Activated CD4-positive, alpha-beta memory T cell treated with anti-CD3 and anti-CD28 coated beads for 36 hours (primary cell): ENCODE measurements at regions of chr3 and their contacts with region 1.

Region 1: DNA sequence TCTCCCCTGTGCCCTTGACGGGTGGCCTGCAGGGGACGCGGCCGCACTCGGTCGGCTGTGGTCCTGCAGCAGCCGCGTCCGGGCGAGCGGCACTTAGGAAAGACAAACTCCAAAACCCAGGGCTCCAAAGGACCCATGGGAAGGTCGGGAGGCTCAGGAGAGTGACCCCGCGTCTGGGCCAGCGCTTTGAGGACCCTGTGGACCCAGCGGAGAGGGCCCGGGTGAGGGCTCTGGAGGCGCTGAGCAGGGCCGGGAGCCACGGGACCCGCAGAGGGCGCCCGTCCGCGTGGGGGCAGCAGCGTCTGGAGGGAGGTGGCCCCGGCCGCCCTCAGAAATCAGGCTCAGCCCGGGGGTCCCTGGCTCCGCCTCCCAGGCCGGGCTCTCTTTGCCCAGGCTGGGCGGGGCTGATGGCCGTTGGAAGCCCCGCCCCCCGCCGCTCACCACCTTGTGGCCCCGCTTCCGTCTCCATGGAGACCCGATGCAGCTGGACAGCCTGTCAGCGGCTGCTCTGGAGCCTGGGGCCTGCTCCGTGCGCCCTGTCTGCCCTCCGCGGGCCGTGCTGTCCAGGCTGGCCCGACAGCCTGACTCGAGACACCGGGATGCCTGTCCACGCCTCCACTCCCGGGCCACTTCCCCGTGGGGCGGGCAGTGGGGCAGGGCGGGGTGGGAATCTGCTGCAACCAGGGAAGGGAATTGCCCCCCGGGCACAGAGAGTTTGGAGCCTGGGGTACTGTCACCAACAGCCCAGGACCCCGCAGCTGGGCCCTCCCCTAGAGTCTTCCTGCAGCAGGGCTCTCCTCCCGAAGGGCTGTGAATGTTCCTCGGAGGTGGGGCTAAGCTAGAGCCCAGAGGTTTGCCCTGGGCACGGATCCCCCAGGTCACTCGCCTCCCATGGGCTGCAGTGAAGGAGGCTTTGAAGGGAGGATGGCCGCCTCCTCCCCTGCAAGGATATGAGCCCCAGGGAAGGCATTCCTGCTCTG is 34.8 kb upstream of the RPL32 start:
- DNase-seq: peak; percentile 30
- H3K4me3 Mint-ChIP-seq: no peak overlapping the region
- H3K27ac Mint-ChIP-seq: no peak overlapping the region
- H3K4me1 Mint-ChIP-seq: no peaks in the 10 kb centered on the region
- H3K27me3 Mint-ChIP-seq: peaks cover 8% of the 10 kb centered on the region

Region 2: DNA sequence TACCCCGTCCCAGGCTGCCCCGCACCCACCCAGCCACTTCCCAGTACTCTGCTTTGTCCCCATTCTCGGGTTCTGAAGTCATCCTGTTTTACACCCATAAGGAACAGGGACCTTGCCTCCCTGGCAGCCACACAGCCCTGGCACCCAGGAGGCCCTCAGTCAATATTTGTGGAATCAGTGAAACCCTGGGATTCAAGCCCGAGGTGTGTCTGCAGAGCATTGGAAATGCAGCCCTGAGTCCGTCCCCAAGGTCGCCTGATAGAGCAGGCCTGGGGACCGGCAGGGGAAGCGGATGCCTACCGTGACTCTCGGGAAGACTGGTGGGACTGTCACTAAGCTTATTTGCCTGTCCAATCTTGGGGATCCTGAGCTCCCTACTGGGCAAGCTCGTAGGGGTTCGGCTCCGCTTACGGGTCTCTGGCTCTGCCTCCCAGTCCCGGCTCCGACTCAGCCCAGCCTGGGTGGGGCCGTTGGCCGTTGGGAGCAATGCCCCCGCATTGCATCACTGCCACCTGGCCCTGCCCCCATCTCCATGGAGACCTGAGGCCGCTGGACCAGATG is 965.1 kb before region 1 on chr3:
- CTCF ChIA-PET with region 1: no interaction called
- POLR2A ChIA-PET with region 1: no interaction called
- intact Hi-C with region 1: loop called (anchors 10 kb)
- DNase-seq: no peak
- H3K4me3 Mint-ChIP-seq: no peak overlapping the region
- H3K27ac Mint-ChIP-seq: no peak overlapping the region
- H3K4me1 Mint-ChIP-seq: peaks cover 8% of the 10 kb centered on the region
- H3K27me3 Mint-ChIP-seq: no peaks in the 10 kb centered on the region